Activated T-helper 2 cell treated with anti-CD3 and anti-CD28 coated beads, Interferon-gamma antibody, Interleukin-2, Interleukin-4, amounts not matched to agents 10 μg/mL and 5 μg/mL and 100 μg/mL, durations not matched to agents 14 hours and 24 hours and 36 hours (primary cell): ENCODE measurements at regions of chr15 and their contacts with region 1.

Region 1: GRCh38 chr15:89760303-89761008 is 9.4 kb upstream of the MESP1 start:
- DNase-seq: peak; percentile 58
- H3K4me3 Mint-ChIP-seq: no peak overlapping the region
- H3K27ac Mint-ChIP-seq: no peak overlapping the region
- H3K4me1 Mint-ChIP-seq: no peaks in the 10 kb centered on the region
- H3K27me3 Mint-ChIP-seq: peaks cover 7% of the 10 kb centered on the region

Region 2: GRCh38 chr15:89874926-89875564 is 114.6 kb after region 1 on chr15:
- intact Hi-C with region 1: loop called (anchors 1 kb)
- DNase-seq: peak; percentile 69
- H3K4me3 Mint-ChIP-seq: no peak overlapping the region
- H3K27ac Mint-ChIP-seq: no peak overlapping the region
- H3K4me1 Mint-ChIP-seq: peaks cover 4% of the 10 kb centered on the region
- H3K27me3 Mint-ChIP-seq: no peaks in the 10 kb centered on the region

Region 3: DNA sequence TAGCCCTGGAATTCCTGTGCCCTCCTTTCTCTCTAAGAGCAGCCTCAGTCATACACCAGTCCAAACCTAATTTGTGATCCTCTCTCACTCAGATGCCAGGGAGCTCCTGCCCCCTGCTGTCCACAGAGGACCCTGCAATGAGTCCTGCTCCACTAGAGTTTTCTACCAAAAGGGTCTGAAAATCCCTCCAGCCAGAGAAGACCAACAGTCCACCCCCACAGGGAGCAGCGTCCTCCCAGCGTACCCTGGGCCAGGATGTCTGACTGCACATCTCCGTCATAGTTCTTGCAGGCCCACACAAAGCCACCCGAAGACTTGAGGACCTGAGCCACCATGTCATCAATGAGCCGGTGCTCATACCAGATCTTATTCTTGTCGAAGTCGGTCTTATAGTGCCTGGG is 326.4 kb after region 1 on chr15:
- intact Hi-C with region 1: loop called (anchors 5 kb)
- DNase-seq: no peak
- H3K4me3 Mint-ChIP-seq: no peak overlapping the region
- H3K27ac Mint-ChIP-seq: no peak overlapping the region
- H3K4me1 Mint-ChIP-seq: peaks cover 9% of the 10 kb centered on the region
- H3K27me3 Mint-ChIP-seq: no peaks in the 10 kb centered on the region